Right cardiac atrium (tissue), 5 donors: ENCODE measurements at regions of chr4 and their contacts with region 1.

Region 1: GRCh38 chr4:123838474-123838873 is 441.9 kb downstream of the SPRY1 start:
- DNase-seq: no peak
- ATAC-seq: no peak
- H3K4me3 ChIP-seq: no peak overlapping the region
- H3K27ac ChIP-seq: no peak overlapping the region
- H3K4me1 ChIP-seq: no peaks in the 10 kb centered on the region
- H3K27me3 ChIP-seq: no peaks in the 10 kb centered on the region

Region 2: GRCh38 chr4:123676890-123677229 is 161.6 kb before region 1 on chr4:
- intact Hi-C with region 1: no loop called
- DNase-seq: no peak
- ATAC-seq: no peak
- H3K4me3 ChIP-seq: no peak overlapping the region
- H3K27ac ChIP-seq: no peak overlapping the region
- H3K4me1 ChIP-seq: peaks cover 1% of the 10 kb centered on the region
- H3K27me3 ChIP-seq: no peaks in the 10 kb centered on the region

Region 3: DNA sequence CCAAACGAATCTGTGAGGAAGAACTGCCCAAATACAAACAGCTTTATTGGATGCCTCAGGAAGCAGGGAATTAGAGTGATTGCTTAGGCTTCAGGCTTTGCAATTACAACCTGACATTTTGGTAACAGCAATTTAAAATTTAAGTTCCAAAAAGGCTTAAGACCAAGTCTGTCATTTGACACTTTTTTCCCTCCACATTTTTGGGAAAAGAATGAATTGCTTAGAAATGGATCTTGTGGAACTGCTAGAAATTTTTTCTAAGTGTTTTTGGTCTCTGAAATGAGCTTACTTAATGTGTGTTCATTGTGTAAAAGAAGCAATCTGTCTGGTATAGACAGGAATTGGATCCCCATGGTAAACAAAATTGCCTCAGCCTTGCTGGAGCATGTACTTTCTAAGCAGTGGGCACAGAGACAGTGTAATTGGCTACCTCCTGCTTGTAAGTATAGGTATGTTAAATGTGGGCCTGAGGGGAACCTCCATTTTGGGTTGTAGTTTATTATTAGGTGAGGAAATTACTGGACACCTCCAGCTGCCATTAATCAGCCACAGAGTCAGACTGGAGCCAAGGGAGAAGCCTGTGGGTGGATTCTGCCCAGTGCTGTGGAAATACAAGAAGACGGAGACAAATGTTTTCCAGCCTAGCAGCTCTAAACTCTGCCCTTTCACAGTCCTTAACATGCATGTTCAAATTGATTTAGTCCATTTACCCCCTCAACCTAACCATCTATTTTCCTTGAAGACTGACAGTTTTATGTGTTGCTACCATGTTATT is 31.0 kb after region 1 on chr4:
- intact Hi-C with region 1: no loop called
- DNase-seq: peak in 2 of 3 donors; percentile 14 to 48
- ATAC-seq: peak; percentile 46 to 64
- H3K4me3 ChIP-seq: no peak overlapping the region
- H3K27ac ChIP-seq: no peak overlapping the region
- H3K4me1 ChIP-seq: peaks cover 4% of the 10 kb centered on the region
- H3K27me3 ChIP-seq: no peaks in the 10 kb centered on the region

Region 4: DNA sequence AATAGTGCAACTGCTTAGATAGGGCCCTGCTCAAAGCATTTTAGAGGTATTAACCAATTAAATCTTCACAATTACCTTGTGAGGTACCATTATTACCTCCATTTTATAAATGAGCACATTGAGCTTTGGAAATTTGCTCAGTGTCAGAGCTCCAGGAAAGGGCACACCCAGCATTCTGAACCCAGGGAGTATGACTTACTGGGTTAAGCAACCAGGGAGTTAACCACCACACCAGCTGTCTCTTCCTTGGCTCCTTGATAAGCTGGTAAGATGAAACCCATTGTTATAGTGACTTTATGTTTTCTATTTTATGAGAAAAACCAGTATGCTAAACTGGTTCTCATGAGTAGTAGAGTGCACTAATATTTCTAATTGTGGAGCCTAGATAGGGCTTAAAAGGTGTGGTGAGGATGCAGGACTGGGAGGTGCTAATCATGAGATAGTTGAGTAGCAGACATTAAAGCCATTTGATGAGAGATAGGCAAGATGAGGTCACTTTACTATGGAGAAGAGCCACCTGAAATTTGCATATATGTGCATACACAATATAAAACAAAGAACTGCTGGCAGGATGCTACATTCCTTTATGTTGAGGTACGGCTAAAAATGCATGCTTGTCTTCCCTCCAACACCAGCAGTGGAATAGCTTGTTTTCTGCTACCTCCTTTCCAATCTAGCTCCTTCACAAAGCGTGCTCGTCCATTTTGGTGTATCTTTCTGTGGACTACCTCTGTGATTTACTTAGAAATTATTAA is 114.2 kb after region 1 on chr4:
- intact Hi-C with region 1: loop called in 1 of 4 experiments (anchors 5 kb)
- DNase-seq: no peak
- ATAC-seq: no peak
- H3K4me3 ChIP-seq: no peak overlapping the region
- H3K27ac ChIP-seq: no peak overlapping the region
- H3K4me1 ChIP-seq: no peaks in the 10 kb centered on the region
- H3K27me3 ChIP-seq: no peaks in the 10 kb centered on the region

Region 5: GRCh38 chr4:124415146-124415545 is 576.7 kb after region 1 on chr4:
- intact Hi-C with region 1: no loop called
- DNase-seq: no peak
- ATAC-seq: no peak
- H3K4me3 ChIP-seq: no peak overlapping the region
- H3K27ac ChIP-seq: no peak overlapping the region
- H3K4me1 ChIP-seq: no peaks in the 10 kb centered on the region
- H3K27me3 ChIP-seq: no peaks in the 10 kb centered on the region